Naive thymus-derived CD4-positive, alpha-beta T cell (primary cell): ENCODE measurements at regions of chr17 and their contacts with region 1.

Region 1: GRCh38 chr17:31231852-31232251 is 65.2 kb downstream of the OMG start:
- DNase-seq: no peak
- ATAC-seq: no peak
- H3K4me3 ChIP-seq: no peak overlapping the region
- H3K4me3 Mint-ChIP-seq: no peak overlapping the region
- H3K27ac ChIP-seq: no peak overlapping the region
- H3K27ac Mint-ChIP-seq: no peak overlapping the region
- H3K4me1 ChIP-seq: no peaks in the 10 kb centered on the region
- H3K4me1 Mint-ChIP-seq: peaks cover 0 to under 1% (median 0%) of the 10 kb centered on the region in 7 donors
- H3K27me3 ChIP-seq: no peaks in the 10 kb centered on the region
- H3K27me3 Mint-ChIP-seq: no peaks in the 10 kb centered on the region

Region 2: DNA sequence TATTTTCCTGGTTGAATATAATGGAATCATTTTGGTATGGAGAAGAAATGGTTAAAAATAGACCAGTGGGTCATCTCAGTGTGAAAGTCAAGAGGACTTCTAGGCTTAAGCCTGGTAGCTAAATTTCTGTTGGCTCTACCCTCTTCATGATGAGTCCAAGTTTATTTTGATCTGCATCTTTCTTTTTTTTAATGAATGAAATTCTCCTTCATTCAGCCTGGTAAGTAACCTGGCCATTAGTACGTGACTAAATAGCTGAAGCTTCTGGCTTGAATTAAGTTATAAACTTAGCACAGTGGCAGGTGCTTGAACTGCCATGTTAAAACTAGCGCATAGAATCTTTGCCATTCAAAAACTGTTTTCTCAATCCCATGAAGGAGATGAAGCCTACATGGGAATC is 109.1 kb before region 1 on chr17:
- CTCF ChIA-PET with region 1: no interaction called
- POLR2A ChIA-PET with region 1: no interaction called
- intact Hi-C with region 1: no loop called
- DNase-seq: no peak
- ATAC-seq: no peak
- H3K4me3 ChIP-seq: no peak overlapping the region
- H3K4me3 Mint-ChIP-seq: no peak overlapping the region
- H3K27ac ChIP-seq: no peak overlapping the region
- H3K27ac Mint-ChIP-seq: no peak overlapping the region
- H3K4me1 ChIP-seq: no peaks in the 10 kb centered on the region
- H3K4me1 Mint-ChIP-seq: peaks cover 0 to 8% (median 4%) of the 10 kb centered on the region in 7 donors
- H3K27me3 ChIP-seq: no peaks in the 10 kb centered on the region
- H3K27me3 Mint-ChIP-seq: no peaks in the 10 kb centered on the region

Region 3: GRCh38 chr17:31286587-31286986 is 54.7 kb after region 1 on chr17:
- CTCF ChIA-PET with region 1: no interaction called
- POLR2A ChIA-PET with region 1: no interaction called
- intact Hi-C with region 1: loop called in 1 of 2 experiments (anchors 10 kb)
- DNase-seq: no peak
- ATAC-seq: no peak
- H3K4me3 ChIP-seq: no peak overlapping the region
- H3K4me3 Mint-ChIP-seq: no peak overlapping the region
- H3K27ac ChIP-seq: no peak overlapping the region
- H3K27ac Mint-ChIP-seq: peak overlapping the region in 3 of 9 donors; percentile 34 to 71 (median 66)
- H3K4me1 ChIP-seq: no peaks in the 10 kb centered on the region
- H3K4me1 Mint-ChIP-seq: peaks cover 8 to 41% (median 36%) of the 10 kb centered on the region in 7 donors
- H3K27me3 ChIP-seq: no peaks in the 10 kb centered on the region
- H3K27me3 Mint-ChIP-seq: no peaks in the 10 kb centered on the region